ENCODE measurements at regions of chr6 and their contacts with region 1.

Region 1: DNA sequence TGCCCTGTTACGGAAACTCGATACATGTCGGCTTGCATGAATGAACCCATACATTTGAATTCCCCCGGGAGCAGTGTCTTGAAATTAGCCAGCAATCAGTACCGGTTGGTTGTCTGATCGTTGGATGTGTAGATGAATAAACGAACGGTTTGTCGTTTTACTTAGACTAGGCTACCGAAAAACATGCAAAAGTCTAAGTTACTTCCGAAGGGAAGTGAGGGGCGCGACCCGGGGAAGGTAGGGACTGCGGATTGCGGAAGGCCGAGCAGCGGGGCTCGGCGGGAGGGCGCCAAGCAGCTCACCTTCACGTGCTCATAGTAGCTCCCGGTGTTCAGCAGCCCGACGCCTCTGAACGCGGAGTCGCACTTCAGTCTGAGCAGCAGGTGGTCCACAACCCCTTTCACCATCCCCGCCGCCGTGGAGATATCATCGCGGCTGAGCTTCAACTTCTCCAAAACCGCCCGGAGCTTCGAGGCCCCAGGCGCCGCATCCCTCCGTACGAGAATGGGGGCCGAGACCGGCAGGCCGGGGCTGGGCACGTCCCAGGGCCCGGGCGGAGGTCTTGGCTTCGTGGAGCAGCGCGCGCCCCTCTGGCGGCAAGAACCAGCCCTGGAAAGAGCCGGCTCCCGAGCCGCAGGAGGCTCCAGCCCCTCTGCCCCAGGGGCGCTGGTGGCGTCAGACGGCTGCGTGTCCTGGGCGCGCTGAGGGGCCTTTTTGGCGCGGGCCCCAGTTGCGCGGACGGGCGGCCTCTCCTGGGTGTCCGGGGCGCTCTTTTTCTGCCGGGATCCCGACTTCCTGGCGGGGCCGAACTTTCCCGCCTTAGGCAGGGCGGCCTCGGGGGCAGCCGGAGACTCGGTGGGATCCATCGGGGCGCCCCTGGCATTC is 632 bp downstream of the CGAS start:
- DNase-seq: peak in 1 of 2 donors; percentile 73
- H3K4me3 ChIP-seq: peak overlapping the region; percentile 69 to 78
- H3K27ac ChIP-seq: peak overlapping the region; percentile 72 to 91
- H3K4me1 ChIP-seq: no peaks in the 10 kb centered on the region
- H3K27me3 ChIP-seq: no peaks in the 10 kb centered on the region
- CTCF ChIP-seq: no peak

Region 2: GRCh38 chr6:73367761-73368355 is 83.6 kb before region 1 on chr6:
- intact Hi-C with region 1: no loop called
- DNase-seq: no peak
- H3K4me3 ChIP-seq: no peak overlapping the region
- H3K27ac ChIP-seq: no peak overlapping the region
- H3K4me1 ChIP-seq: no peaks in the 10 kb centered on the region
- H3K27me3 ChIP-seq: no peaks in the 10 kb centered on the region
- CTCF ChIP-seq: no peak

Region 3: GRCh38 chr6:73585566-73586415 is 134.3 kb after region 1 on chr6:
- intact Hi-C with region 1: loop called (anchors 5 kb)
- DNase-seq: peak in 1 of 2 donors; percentile 75
- H3K4me3 ChIP-seq: peak overlapping the region; percentile 25 to 35
- H3K27ac ChIP-seq: peak overlapping the region; percentile 85 to 87
- H3K4me1 ChIP-seq: peaks cover 0 to 9% of the 10 kb centered on the region in 2 donors
- H3K27me3 ChIP-seq: no peaks in the 10 kb centered on the region
- CTCF ChIP-seq: no peak

Region 4: DNA sequence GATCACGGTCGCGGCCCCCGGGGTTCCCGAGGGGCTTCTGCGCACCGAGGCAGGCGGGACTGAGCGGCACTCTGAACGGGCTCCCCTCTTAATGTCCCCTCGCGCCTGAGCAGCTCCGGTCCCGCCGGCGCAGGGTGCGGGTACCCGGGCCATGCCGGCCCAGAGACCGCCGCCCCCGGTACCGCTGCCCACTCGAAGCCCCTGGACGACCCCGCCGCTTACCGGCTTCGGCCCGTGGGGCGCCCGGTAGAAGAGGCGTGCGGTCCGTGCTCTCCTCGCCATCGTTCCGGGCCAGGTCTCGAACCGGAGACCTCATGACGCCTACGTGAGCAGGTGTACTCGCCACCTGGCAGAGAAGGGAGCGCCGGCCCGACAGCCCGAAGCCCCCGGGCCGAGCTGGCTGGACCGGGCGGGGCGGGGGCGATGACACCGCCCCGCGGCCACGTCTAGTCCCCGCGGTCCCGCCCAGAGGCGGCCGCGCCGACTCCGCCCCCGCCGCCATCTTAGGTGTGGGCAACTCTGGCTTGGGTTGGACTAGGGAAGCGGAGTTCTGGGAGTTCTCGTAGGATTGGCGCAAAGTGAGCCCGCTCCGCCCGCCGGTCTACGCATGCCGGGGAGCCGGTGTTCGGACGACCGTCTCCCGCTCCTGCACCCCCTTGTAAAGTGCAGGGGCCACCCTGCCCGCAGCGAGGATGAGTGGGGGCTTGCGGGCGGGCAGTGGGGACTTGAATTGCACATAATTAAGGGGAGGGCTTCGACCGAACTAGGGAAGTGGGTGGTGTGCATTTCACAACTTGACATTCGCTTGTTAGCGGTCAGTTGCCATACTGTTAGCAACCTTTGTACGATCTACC is 202.3 kb after region 1 on chr6 and contains the start of gene SLC17A5:
- intact Hi-C with region 1: loop called (anchors 5 kb)
- DNase-seq: peak; percentile 88 to 98
- H3K4me3 ChIP-seq: peak within 1 kb of the TSS; percentile 91 to 100
- H3K27ac ChIP-seq: peak within 1 kb of the TSS; percentile 97 to 98
- H3K4me1 ChIP-seq: peaks cover 0 to 4% of the 10 kb centered on the region in 2 donors
- H3K27me3 ChIP-seq: no peaks in the 10 kb centered on the region
- CTCF ChIP-seq: no peak
- total RNA-seq, gene SLC17A5: 23.2 TPM

Measured in ascending aorta (tissue), 2 donors.